CD14-positive monocyte (primary cell): ENCODE measurements at regions of chr9 and their contacts with region 1.

Region 1: DNA sequence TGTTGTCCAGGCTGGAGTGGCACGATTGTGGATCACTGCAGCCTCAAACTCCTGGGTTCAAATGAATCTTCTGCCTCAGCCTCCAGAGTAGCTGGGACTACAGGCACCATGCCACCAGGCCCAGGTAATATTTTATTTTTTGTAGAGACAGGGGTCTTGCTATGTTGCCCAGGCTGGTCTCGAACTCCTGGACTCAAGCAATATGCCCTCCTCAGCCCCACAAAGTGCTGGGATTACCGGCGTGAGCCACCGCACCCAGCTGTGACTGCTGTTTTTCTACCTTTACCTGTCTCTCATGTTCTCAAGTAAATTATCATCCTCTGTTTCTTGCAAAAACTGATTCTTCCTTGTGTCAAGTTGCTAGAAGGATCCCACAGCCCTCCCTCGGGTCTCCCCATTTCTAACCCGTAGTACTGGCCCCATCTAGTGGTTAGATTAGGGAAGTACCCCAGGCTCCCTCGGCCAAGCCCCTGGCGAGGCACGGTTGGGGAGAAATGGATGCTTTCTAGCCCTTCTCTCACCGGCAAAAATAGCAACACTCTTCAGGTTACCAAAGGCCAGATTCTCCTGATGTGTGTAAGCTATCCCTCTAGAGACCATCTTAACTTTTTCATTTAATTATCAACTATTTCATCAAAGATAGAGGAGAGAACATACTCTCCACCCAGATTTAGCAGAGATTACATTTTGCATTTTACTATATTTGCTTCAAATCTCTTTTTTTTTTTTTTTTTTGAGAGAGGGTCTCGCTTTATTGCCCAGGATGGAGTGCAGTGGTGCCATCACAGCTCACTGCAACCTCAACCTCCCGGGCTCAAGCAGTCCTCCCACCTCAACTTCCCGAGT is 19.2 kb upstream of the TOR1B start:
- DNase-seq: peak; percentile 75 to 84 (median 82)
- H3K4me3 ChIP-seq: no peak overlapping the region
- H3K4me3 Mint-ChIP-seq: peak overlapping the region in 1 of 2 donors; percentile 43
- H3K27ac ChIP-seq: no peak overlapping the region
- H3K27ac Mint-ChIP-seq: peak overlapping the region in 6 of 7 donors; percentile 56 to 90 (median 70)
- H3K4me1 ChIP-seq: peaks cover 23 to 30% of the 10 kb centered on the region in 2 donors
- H3K4me1 Mint-ChIP-seq: peaks cover 33% of the 10 kb centered on the region
- H3K27me3 ChIP-seq: no peaks in the 10 kb centered on the region
- H3K27me3 Mint-ChIP-seq: peaks cover 17 to 31% (median 17%) of the 10 kb centered on the region in 3 donors
- CTCF ChIP-seq: peak; percentile 88

Region 2: DNA sequence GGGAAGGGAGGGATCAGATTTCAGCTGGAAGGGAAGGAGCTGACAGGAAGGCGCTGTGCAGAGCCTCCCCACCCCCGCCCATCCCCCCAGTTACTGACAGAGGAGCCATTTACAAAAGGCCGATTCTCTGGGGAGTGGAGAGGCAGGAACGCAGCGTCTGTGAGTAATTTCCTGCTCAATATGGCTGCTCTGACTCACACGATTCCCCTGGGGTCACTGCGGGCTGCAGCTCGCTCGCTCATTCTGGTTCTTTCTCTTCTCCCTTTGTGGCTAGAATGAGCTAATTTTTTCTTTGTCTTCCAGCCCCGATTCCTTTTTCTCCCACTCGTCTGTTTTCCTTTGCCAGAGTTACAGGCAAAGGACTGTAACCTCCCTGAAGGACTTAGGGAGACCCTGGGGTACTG is 643.7 kb before region 1 on chr9:
- intact Hi-C with region 1: loop called (anchors 10 kb)
- DNase-seq: peak; percentile 94 to 98 (median 95)
- H3K4me3 ChIP-seq: peak overlapping the region; percentile 27 to 73 (median 32)
- H3K4me3 Mint-ChIP-seq: peak overlapping the region; percentile 79 to 92
- H3K27ac ChIP-seq: peak overlapping the region; percentile 97 to 99
- H3K27ac Mint-ChIP-seq: peak overlapping the region; percentile 96 to 98 (median 97)
- H3K4me1 ChIP-seq: peaks cover 37 to 47% of the 10 kb centered on the region in 2 donors
- H3K4me1 Mint-ChIP-seq: peaks cover 41% of the 10 kb centered on the region
- H3K27me3 ChIP-seq: no peaks in the 10 kb centered on the region
- H3K27me3 Mint-ChIP-seq: peaks cover 0 to 2% (median 0%) of the 10 kb centered on the region in 3 donors
- CTCF ChIP-seq: no peak

Region 3: DNA sequence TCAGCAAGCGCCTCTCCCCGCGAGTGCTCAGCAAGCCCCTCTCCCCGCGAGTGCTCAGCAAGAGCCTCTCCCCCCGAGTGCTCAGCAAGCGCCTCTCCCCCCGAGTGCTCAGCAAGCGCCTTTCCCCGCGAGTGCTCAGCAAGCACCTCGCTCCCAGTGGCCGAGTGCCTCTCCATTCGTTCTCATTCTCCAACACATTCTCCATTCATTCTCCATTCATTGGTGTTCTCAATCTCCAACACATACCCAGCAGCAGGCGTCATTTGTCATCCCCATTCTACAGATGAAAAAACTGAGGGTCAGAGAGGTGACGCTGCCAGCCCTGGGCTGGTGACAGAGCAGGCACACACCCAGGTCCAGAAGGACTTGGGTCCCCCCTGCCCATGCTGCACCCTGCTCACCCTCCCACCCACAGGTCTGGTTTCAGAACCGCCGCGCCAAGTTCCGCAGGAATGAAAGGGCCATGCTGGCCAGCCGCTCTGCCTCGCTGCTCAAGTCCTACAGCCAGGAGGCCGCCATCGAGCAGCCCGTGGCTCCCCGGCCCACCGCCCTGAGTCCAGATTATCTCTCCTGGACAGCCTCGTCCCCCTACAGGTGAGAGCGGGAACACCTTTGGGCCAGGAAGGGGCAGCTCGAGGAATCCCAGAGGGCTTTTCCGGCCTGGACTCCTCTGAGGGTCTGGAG is 63.4 kb before region 1 on chr9:
- intact Hi-C with region 1: no loop called
- DNase-seq: no peak
- H3K4me3 ChIP-seq: no peak overlapping the region
- H3K4me3 Mint-ChIP-seq: no peak overlapping the region
- H3K27ac ChIP-seq: no peak overlapping the region
- H3K27ac Mint-ChIP-seq: no peak overlapping the region
- H3K4me1 ChIP-seq: no peaks in the 10 kb centered on the region
- H3K4me1 Mint-ChIP-seq: no peaks in the 10 kb centered on the region
- H3K27me3 ChIP-seq: no peaks in the 10 kb centered on the region
- H3K27me3 Mint-ChIP-seq: peaks cover 7 to 16% (median 12%) of the 10 kb centered on the region in 3 donors
- CTCF ChIP-seq: peak; percentile 10